ENCODE measurements at regions of chr4 and their contacts with region 1.

Region 1: GRCh38 chr4:102620697-102621497 is 119.7 kb downstream of the NFKB1 start:
- DNase-seq: peak; percentile 75
- ATAC-seq: peak; percentile 94
- H3K4me3 ChIP-seq: peak overlapping the region in 1 of 2 experiments; percentile 40; a peak in 2 of 4 replicates
- H3K27ac ChIP-seq: no peak overlapping the region
- H3K4me1 ChIP-seq: peaks cover 6% of the 10 kb centered on the region; the same call in 1 of the 2 replicates
- H3K27me3 ChIP-seq: no peaks in the 10 kb centered on the region
- CTCF ChIP-seq: peak; percentile 65

Region 2: DNA sequence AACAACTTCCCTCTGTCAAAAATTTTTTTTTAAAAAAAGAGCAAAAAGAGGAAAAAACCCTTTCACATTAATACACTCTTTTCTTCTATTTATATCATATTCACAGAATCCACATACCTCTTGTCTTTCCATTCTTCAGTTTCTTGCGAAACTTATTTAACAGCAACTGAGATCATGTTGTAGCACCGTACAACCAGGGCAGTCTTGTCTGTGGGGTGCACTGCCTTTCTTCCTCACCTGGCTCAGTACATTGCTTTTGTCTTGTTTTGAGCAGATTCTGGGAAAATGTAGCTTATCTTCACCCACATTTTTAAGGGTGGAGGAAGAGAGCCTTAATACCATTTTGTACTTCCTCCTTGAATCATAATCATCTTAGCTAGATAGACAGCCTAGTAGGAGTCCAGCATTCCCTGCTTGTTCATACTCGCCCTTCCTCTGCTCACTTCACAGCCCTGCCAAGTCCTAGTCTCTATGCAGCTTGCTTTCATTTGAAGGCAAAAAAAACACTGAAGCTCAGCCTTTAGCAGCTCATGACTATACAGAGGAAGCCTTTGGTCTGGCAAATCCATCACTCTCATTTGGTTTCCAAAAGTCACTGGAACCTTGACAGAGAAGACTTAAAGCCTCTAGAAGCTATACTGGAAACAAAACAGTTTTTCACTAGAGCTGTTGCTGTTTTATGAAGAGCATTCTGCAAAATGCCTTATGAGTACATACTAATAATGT is 970.9 kb before region 1 on chr4:
- CTCF ChIA-PET with region 1: no interaction called
- POLR2A ChIA-PET with region 1: no interaction called
- in situ Hi-C with region 1: no loop called
- intact Hi-C with region 1: no loop called
- DNase-seq: no peak
- ATAC-seq: no peak
- H3K4me3 ChIP-seq: no peak overlapping the region
- H3K27ac ChIP-seq: no peak overlapping the region
- H3K4me1 ChIP-seq: no peaks in the 10 kb centered on the region
- H3K27me3 ChIP-seq: no peaks in the 10 kb centered on the region
- CTCF ChIP-seq: no peak

Region 3: GRCh38 chr4:102299354-102300107 is 321.4 kb before region 1 on chr4:
- CTCF ChIA-PET with region 1: no interaction called
- POLR2A ChIA-PET with region 1: no interaction called
- in situ Hi-C with region 1: no loop called
- intact Hi-C with region 1: no loop called
- DNase-seq: peak; percentile 20
- ATAC-seq: peak; percentile 80
- H3K4me3 ChIP-seq: no peak overlapping the region
- H3K27ac ChIP-seq: no peak overlapping the region
- H3K4me1 ChIP-seq: no peaks in the 10 kb centered on the region
- H3K27me3 ChIP-seq: no peaks in the 10 kb centered on the region
- CTCF ChIP-seq: peak; percentile 79

Region 4: DNA sequence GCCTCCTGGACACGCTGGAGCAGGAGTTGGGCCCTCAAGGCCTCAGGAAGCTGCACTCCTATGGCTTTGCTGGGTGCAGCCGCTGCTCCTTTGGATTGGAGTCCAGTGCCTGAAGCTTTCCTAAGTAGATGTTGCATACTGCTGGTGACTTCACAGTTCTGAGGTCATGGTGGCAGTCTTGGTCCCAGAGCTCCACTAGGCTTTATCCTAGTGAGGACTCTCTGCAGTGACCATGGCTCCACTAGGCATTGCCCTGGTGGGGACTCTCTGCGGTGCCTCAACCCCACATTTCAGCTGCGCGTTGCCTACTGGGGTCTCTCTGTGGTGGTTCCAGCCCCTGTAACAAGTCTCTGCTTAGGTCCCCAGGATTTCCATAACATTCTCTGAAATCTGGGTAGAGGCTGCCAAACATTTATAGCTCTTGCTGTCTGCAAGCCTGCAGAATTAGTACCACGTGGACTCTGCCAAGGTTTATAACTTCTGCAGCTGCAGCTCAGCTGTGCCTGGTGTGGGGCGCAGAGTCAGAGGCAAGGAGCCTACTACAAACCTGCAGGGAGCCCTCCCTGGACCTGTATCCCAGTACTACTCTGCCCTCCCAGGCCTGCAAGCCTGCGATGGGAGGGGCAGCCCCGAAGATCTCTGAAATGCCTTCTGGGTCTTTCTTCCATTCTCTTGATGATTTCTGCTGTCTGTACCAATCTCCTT is 165.8 kb before region 1 on chr4:
- CTCF ChIA-PET with region 1: no interaction called
- POLR2A ChIA-PET with region 1: no interaction called
- in situ Hi-C with region 1: no loop called
- intact Hi-C with region 1: no loop called
- DNase-seq: no peak
- ATAC-seq: no peak
- H3K4me3 ChIP-seq: no peak overlapping the region
- H3K27ac ChIP-seq: no peak overlapping the region
- H3K4me1 ChIP-seq: no peaks in the 10 kb centered on the region
- H3K27me3 ChIP-seq: no peaks in the 10 kb centered on the region
- CTCF ChIP-seq: no peak

Region 5: GRCh38 chr4:102792361-102792936 is 171.6 kb after region 1 on chr4:
- CTCF ChIA-PET with region 1: interaction called, 4 read pairs
- POLR2A ChIA-PET with region 1: no interaction called
- in situ Hi-C with region 1: no loop called
- intact Hi-C with region 1: loop called (anchors 10 kb)
- DNase-seq: no peak
- ATAC-seq: no peak
- H3K4me3 ChIP-seq: no peak overlapping the region
- H3K27ac ChIP-seq: no peak overlapping the region
- H3K4me1 ChIP-seq: no peaks in the 10 kb centered on the region
- H3K27me3 ChIP-seq: no peaks in the 10 kb centered on the region
- CTCF ChIP-seq: no peak

Region 6: GRCh38 chr4:103008875-103009729 is 388.2 kb after region 1 on chr4:
- CTCF ChIA-PET with region 1: interaction called, 6 read pairs
- POLR2A ChIA-PET with region 1: interaction called, 3 read pairs
- in situ Hi-C with region 1: no loop called
- intact Hi-C with region 1: loop called (anchors 2 kb)
- DNase-seq: peak; percentile 73
- ATAC-seq: peak; percentile 94
- H3K4me3 ChIP-seq: peak overlapping the region; percentile 16 to 37
- H3K27ac ChIP-seq: no peak overlapping the region
- H3K4me1 ChIP-seq: no peaks in the 10 kb centered on the region
- H3K27me3 ChIP-seq: no peaks in the 10 kb centered on the region
- CTCF ChIP-seq: peak; percentile 63; the same call in 1 of the 2 replicates

Region 7: GRCh38 chr4:103099691-103100392 is 478.9 kb after region 1 on chr4 and contains the start of gene BDH2:
- CTCF ChIA-PET with region 1: interaction called, 3 read pairs
- POLR2A ChIA-PET with region 1: no interaction called
- in situ Hi-C with region 1: no loop called
- intact Hi-C with region 1: loop called (anchors 5 kb)
- DNase-seq: no peak
- ATAC-seq: peak; percentile 91
- H3K4me3 ChIP-seq: peak within 1 kb of the TSS; percentile 35 to 47
- H3K27ac ChIP-seq: peak within 1 kb of the TSS; percentile 54; the same call in 1 of the 2 replicates
- H3K4me1 ChIP-seq: no peaks in the 10 kb centered on the region; the same call in 1 of the 2 replicates
- H3K27me3 ChIP-seq: no peaks in the 10 kb centered on the region
- CTCF ChIP-seq: peak; percentile 72
- total RNA-seq, gene BDH2: 0.98 TPM

Measured in Panc1 (cell line).